ENCODE measurements at regions of chr9 and their contacts with region 1.

Region 1: GRCh38 chr9:108478431-108478837 is 377.4 kb downstream of the ACTL7B start:
- DNase-seq: peak; percentile 97
- H3K4me3 Mint-ChIP-seq: peak overlapping the region; percentile 37
- H3K27ac Mint-ChIP-seq: peak overlapping the region; percentile 89
- H3K4me1 Mint-ChIP-seq: peaks cover 47% of the 10 kb centered on the region
- H3K27me3 Mint-ChIP-seq: no peaks in the 10 kb centered on the region
- CTCF ChIP-seq: no peak

Region 2: DNA sequence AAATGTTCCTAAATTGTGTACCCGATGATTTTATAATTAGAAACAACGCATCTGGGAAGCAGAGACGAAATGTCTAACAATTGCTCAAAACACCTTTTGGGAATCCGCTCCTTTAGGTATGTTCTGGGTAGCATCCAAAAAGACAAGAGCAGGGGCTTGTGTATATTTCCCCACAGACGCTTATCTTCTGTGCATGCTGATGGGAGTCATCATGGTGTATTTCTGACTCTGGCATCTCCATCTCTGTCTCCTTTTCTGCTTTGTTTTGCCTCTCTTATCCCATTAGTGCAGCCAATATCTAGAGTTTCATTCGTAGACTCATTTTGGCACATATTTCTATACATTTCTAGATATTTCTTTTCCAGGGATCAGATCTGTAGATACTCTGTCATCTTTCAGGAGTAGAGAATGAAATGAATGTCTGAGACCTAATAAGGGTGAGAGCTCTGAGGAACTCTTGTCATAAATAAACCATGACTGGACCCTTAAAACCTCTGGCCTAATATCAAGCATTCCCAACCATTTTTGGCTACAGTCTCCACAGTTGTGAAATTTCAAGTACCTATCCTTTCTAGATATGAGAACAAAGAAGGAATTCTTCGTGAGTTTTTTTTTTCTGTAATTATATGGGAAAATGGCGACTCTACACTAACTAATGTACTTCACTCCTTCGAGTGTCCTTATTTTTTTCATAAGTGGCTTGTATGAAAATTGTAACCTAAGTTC is 130.8 kb before region 1 on chr9:
- CTCF ChIA-PET with region 1: no interaction called
- POLR2A ChIA-PET with region 1: no interaction called
- intact Hi-C with region 1: no loop called
- DNase-seq: no peak
- H3K4me3 Mint-ChIP-seq: no peak overlapping the region
- H3K27ac Mint-ChIP-seq: no peak overlapping the region
- H3K4me1 Mint-ChIP-seq: no peaks in the 10 kb centered on the region
- H3K27me3 Mint-ChIP-seq: no peaks in the 10 kb centered on the region
- CTCF ChIP-seq: no peak

Region 3: DNA sequence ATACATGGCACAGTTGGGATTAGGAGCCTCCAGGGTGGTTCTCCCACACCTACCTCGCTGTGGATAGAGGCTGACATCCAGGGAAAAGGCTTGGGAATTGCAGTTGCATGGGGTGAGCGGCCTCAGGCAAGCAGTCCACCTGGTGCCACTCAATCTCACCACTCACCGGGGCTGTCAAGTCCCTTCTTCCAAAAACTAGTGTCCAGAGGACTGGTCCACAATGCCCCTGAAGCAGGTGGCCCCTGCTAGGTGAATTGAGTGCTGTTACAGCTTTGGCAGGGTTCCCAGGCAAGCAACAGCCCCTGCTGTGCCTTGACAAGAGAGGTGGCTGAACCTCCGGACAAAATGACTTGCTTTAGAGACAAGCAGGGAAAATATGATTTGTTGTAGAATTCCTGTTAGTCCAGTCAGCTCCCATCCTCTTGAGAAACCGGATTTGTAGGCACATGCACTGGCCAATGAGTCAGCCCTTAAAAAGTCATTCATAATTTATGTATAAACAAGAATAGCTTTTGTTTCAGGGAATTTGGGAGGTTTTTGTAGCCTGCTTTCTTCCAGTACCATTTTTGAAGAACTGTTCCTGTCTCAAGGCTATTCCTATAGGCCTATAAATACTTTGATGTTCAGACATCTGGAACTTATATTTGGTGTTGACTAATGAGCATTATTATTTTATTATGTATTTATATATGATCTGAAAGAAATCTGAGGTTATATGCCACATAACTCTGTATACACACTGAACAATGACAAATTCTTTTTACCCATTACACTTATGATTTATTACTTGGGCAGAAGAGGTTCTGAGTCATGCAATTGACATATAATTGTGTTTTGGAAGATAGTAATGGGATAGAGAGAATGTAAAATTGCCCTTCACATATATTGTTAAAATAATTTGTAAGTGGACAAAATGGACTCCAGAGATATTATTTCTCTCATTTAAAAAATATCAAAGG is 33.8 kb before region 1 on chr9:
- CTCF ChIA-PET with region 1: no interaction called
- POLR2A ChIA-PET with region 1: interaction called, 22 read pairs
- intact Hi-C with region 1: loop called (anchors 1 kb)
- DNase-seq: peak; percentile 88
- H3K4me3 Mint-ChIP-seq: peak overlapping the region; percentile 62
- H3K27ac Mint-ChIP-seq: peak overlapping the region; percentile 63
- H3K4me1 Mint-ChIP-seq: peaks cover 40% of the 10 kb centered on the region
- H3K27me3 Mint-ChIP-seq: no peaks in the 10 kb centered on the region
- CTCF ChIP-seq: no peak

Region 4: GRCh38 chr9:108543251-108543768 is 64.9 kb after region 1 on chr9:
- CTCF ChIA-PET with region 1: no interaction called
- POLR2A ChIA-PET with region 1: interaction called, 11 read pairs
- intact Hi-C with region 1: loop called (anchors 1 kb)
- DNase-seq: peak; percentile 90
- H3K4me3 Mint-ChIP-seq: no peak overlapping the region
- H3K27ac Mint-ChIP-seq: peak overlapping the region; percentile 46
- H3K4me1 Mint-ChIP-seq: peaks cover 11% of the 10 kb centered on the region
- H3K27me3 Mint-ChIP-seq: no peaks in the 10 kb centered on the region
- CTCF ChIP-seq: no peak